Uterus (tissue), 4 donors: ENCODE measurements at regions of chr18 and their contacts with region 1.

Region 1: GRCh38 chr18:5496305-5496704 is 47.5 kb downstream of the EPB41L3 start:
- DNase-seq: no peak
- H3K4me3 ChIP-seq: no peak overlapping the region
- H3K27ac ChIP-seq: no peak overlapping the region
- H3K4me1 ChIP-seq: no peaks in the 10 kb centered on the region
- H3K27me3 ChIP-seq: no peaks in the 10 kb centered on the region
- CTCF ChIP-seq: no peak
- POLR2A ChIP-seq: no peak

Region 2: DNA sequence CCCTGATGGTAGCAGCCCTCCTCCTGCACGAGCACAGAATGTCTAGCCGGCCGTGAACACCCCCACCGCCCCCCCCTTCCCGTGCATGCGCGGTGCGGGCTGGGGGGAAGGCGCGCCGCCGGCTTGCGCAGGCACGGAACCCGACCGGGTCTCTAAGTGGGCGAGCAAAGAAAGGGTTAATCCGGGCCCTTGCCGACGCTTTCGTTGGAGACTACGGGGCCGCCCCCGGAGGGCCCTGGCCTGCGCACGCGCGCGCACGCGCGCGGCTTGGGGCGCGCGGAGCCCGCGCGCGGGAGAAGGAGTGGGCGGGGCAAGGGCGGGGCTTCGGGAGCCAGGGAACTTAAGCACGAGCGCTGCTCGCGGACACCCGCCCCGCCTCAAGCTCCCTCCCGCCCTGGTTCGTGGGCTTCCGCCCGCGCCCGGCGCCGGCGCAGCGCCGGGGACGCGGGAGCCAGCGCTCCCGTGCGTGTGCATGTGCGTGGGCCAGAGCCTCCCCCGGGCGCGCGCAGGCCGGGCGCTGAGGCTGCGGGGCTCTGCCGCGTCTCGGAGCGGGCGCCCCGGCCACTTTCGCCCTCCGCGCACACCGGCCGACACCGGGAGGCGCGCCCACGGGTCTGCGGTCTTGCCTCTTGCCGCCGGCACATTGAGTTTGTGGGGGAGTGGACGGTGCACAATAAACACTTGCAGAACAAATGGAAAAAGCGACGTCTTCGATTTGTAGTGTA is 200.2 kb before region 1 on chr18:
- intact Hi-C with region 1: no loop called
- DNase-seq: peak; percentile 97 to 98
- H3K4me3 ChIP-seq: peak overlapping the region; percentile 84 to 99
- H3K27ac ChIP-seq: peak overlapping the region; percentile 97 to 100
- H3K4me1 ChIP-seq: no peaks in the 10 kb centered on the region
- H3K27me3 ChIP-seq: no peaks in the 10 kb centered on the region
- CTCF ChIP-seq: no peak
- POLR2A ChIP-seq: peak in 1 of 2 donors; percentile 55

Region 3: DNA sequence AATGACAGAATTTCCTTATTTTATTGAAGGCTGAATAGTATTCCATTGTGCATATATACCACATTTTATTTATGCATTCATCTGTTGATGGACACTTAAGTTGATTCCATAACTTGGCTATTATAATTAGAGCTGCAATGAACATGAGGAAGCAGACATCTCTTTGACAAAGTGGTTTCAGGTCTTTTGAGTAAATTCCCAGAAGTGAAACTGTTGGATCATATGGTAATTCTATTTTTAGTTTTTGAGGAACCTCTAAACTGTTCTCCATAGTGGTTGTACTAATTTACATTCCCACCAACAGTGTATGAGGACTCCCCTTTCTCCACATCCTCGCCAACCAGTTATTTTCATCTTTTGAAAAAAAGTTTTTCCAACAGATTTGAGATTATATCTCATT is 321.5 kb after region 1 on chr18:
- intact Hi-C with region 1: no loop called
- DNase-seq: no peak
- H3K4me3 ChIP-seq: no peak overlapping the region
- H3K27ac ChIP-seq: no peak overlapping the region
- H3K4me1 ChIP-seq: no peaks in the 10 kb centered on the region
- H3K27me3 ChIP-seq: no peaks in the 10 kb centered on the region
- CTCF ChIP-seq: no peak
- POLR2A ChIP-seq: no peak

Region 4: DNA sequence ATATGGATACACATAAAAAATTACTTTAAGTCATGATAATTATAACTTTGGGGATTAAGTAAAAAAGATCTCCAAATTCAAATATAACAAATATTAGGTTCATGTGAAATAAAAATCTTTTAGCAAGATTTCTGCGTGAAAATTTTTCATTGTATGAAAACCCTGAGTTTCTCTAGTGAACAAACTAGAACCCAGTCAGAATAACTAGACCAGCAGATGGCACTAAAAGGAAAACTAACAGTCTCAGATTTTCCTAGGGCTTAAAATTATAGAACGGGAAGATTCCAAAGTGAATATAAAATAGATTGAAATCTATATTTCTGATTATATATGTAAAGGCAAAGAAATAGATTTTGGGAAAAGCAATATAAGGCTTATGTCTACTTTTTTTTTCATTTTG is 355.7 kb after region 1 on chr18:
- intact Hi-C with region 1: no loop called
- DNase-seq: no peak
- H3K4me3 ChIP-seq: no peak overlapping the region
- H3K27ac ChIP-seq: no peak overlapping the region
- H3K4me1 ChIP-seq: no peaks in the 10 kb centered on the region
- H3K27me3 ChIP-seq: no peaks in the 10 kb centered on the region
- CTCF ChIP-seq: no peak
- POLR2A ChIP-seq: no peak

Region 5: GRCh38 chr18:6313415-6313814 is 817.1 kb after region 1 on chr18:
- intact Hi-C with region 1: loop called (anchors 5 kb)
- DNase-seq: no peak
- H3K4me3 ChIP-seq: no peak overlapping the region
- H3K27ac ChIP-seq: no peak overlapping the region
- H3K4me1 ChIP-seq: no peaks in the 10 kb centered on the region
- H3K27me3 ChIP-seq: no peaks in the 10 kb centered on the region
- CTCF ChIP-seq: no peak
- POLR2A ChIP-seq: no peak